Activated CD4-positive, alpha-beta T cell treated with anti-CD3 and anti-CD28 coated beads, Interleukin-2, amount 10 ng/mL, durations not matched to agents 24 days and 14 days (primary cell): ENCODE measurements at regions of chr18 and their contacts with region 1.

Region 1: DNA sequence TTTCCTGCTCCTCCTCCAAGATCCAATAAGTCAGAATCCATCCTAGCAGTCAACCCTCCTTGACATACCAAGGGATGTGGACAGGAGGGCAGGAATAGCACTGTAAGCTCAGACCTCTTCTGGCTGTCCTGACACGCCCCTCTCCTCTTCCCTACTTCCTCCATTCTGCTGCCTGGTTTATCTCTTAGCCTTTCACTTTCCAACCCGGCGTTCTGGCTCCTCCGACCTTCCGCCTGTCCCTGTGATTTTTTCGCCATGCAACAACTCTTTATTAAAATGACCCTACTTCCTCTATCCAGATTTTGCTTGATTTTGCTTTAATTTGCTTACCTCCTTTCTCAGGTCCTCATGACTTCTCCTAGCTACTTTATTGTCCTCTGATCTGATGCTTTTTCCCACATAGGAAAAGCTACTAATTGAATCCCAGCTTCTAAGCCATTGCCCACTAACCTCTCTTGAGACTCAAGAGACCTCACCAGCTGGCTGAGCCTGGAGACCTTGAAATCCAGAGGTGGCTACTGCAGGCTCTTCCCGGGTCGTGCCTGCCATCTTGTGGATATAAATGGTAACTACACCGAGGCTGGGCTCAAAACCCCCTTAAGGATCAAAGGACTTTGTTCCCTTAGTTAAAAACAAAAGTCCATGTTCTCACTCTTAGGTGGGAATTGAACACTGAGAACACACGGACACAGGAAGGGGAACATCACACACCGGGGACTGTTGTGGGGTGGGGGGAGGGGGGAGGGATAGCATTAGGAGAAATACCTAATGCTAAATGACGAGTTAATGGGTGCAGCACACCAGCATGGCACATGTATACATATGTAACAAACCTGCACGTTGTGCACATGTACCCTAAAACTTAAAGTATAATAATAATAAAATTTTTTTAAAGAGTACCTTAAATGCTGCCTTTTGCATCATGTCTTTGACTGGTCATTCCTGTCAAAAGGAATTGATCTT is 139.4 kb downstream of the AKAIN1 start:
- DNase-seq: peak; percentile 85
- H3K4me3 Mint-ChIP-seq: no peak overlapping the region
- H3K27ac Mint-ChIP-seq: no peak overlapping the region
- H3K4me1 Mint-ChIP-seq: peaks cover 10% of the 10 kb centered on the region
- H3K27me3 Mint-ChIP-seq: peaks cover 4% of the 10 kb centered on the region

Region 2: DNA sequence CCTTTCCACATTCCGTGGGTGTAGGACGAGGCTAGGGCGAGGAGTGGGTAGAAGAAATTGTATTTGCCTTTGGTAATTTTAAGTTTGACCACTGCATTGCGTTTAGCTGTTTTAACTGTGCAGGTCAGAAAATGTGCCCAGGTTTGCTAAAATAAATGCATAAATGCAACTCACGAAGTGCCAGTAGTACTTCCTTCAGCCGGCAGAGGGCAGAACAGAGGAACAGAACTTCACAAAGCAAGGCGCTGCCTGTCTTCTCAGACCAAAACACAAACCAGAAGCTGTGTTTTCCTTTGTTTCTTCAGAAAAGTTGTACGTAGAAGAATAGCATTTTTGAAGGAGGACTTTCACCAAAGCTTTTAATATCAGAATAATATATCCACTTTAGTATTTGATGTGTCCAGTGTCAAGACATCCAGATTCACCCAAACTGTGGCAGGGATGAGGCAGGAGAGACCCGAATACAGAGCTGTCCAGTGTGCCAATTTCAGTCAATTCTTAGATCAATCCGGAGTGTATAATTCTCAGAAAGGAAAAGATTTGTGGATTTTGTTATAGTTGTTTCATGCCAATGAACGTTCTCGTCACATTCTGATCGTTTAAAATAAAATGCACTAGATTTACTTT is 951.1 kb before region 1 on chr18:
- intact Hi-C with region 1: loop called (anchors 1 kb)
- DNase-seq: peak; percentile 87
- H3K4me3 Mint-ChIP-seq: no peak overlapping the region
- H3K27ac Mint-ChIP-seq: no peak overlapping the region
- H3K4me1 Mint-ChIP-seq: no peaks in the 10 kb centered on the region
- H3K27me3 Mint-ChIP-seq: peaks cover 2% of the 10 kb centered on the region